Activated naive CD4-positive, alpha-beta T cell treated with anti-CD3 and anti-CD28 coated beads, Interleukin-2, amount 10 ng/mL, durations not matched to agents 7 days and 5 days (primary cell): ENCODE measurements at regions of chr5 and their contacts with region 1.

Region 1: DNA sequence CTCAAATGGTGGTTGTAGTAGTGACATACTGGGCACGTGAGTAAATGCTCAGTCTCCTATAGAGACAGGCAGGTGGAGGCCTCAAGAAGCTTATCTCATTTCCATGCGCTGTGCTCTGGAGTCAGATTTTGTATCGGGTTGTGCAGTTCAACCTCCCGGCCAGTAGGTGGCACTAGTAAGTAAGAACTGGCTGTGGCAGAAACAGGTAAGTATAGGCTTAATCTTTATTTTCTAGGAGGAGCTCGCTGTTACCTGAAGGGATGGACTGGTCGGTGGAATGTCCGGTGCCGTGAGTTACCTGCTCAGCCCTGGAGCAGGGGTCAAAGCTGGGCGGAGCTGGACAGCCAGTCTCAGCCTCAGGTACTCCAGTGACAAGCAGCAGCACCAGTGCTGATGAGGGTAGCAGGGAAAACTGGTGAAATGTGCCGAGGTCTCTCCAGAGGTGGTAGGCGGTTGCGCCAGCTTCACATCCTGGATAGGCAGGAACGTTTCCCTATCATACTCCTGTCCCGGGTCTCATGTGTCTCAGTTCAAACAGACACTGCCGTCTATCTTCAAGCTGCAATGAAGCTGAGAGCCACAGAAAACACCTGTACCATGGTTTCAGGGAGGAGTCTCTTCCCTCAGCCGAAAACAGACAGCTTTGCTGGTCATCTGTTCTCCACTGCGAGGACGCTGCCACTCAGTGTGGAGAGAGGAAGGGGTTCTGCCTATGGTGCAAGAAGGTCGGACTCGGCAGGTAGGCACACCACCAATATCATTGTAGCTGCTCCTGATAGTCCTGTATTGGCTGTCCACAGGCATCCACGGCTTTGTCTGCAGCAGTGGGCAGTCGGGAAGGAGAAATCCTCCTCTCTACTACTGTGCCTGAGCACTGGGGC is 880.3 kb upstream of the SEMA6A start:
- DNase-seq: peak; percentile 60
- H3K4me3 Mint-ChIP-seq: peak overlapping the region; percentile 29
- H3K27ac Mint-ChIP-seq: no peak overlapping the region
- H3K4me1 Mint-ChIP-seq: no peaks in the 10 kb centered on the region
- H3K27me3 Mint-ChIP-seq: no peaks in the 10 kb centered on the region

Region 2: DNA sequence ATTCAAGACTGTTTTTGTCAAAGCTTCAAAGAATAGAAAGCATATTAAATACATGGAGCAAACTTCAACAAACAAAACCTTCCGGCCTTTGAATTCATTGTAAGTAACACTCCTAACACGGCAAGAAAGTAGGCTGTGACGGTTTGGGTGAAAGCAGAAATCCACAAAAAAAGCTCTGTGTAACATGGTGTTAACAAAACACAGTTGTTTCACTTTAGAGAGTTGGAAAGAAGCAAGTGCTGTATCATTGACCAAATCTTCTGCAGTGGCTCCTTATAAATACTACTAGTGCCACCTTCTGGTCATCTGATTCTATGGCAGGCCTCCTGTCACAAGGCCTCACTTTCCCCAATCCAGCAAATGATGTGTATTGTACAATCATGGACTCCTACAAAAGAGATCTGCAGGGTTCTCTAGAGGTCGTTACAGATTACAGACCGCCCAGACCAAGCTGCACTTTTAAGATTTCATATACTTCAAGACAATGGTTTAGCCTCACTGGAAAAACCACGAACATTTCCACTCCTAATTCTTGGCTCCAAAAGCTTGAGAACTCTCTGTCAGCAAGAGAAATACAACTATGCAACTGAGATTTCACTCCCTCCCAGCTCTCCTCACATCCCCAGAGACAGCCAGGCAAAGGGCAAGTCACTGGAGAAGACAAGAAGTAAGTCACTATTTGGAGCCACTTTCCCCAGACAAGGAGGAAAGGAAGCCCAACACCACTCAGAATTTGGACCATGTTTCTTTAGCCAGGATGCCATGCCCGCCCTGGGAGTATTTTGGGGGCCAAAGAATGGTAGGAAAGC is 1337.2 kb after region 1 on chr5:
- CTCF ChIA-PET with region 1: interaction called, 27 read pairs
- DNase-seq: no peak
- H3K4me3 Mint-ChIP-seq: no peak overlapping the region
- H3K27ac Mint-ChIP-seq: no peak overlapping the region
- H3K4me1 Mint-ChIP-seq: no peaks in the 10 kb centered on the region
- H3K27me3 Mint-ChIP-seq: no peaks in the 10 kb centered on the region